Panc1 (cell line): ENCODE measurements at regions of chr1 and their contacts with region 1.

Region 1: GRCh38 chr1:53442299-53442698 is 16.9 kb upstream of the DMRTB1 start:
- DNase-seq: no peak
- ATAC-seq: no peak
- H3K4me3 ChIP-seq: no peak overlapping the region
- H3K27ac ChIP-seq: no peak overlapping the region
- H3K4me1 ChIP-seq: no peaks in the 10 kb centered on the region
- H3K27me3 ChIP-seq: no peaks in the 10 kb centered on the region
- CTCF ChIP-seq: no peak

Region 2: GRCh38 chr1:52444463-52444862 is 997.8 kb before region 1 on chr1:
- CTCF ChIA-PET with region 1: no interaction called
- POLR2A ChIA-PET with region 1: no interaction called
- in situ Hi-C with region 1: no loop called
- intact Hi-C with region 1: no loop called
- DNase-seq: no peak
- ATAC-seq: no peak
- H3K4me3 ChIP-seq: no peak overlapping the region
- H3K27ac ChIP-seq: no peak overlapping the region
- H3K4me1 ChIP-seq: no peaks in the 10 kb centered on the region
- H3K27me3 ChIP-seq: no peaks in the 10 kb centered on the region
- CTCF ChIP-seq: no peak

Region 3: GRCh38 chr1:53266106-53266505 is 176.2 kb before region 1 on chr1:
- CTCF ChIA-PET with region 1: no interaction called
- POLR2A ChIA-PET with region 1: interaction called, 10 read pairs
- in situ Hi-C with region 1: no loop called
- intact Hi-C with region 1: no loop called
- DNase-seq: no peak
- ATAC-seq: peak; percentile 69
- H3K4me3 ChIP-seq: no peak overlapping the region
- H3K27ac ChIP-seq: no peak overlapping the region
- H3K4me1 ChIP-seq: no peaks in the 10 kb centered on the region
- H3K27me3 ChIP-seq: no peaks in the 10 kb centered on the region
- CTCF ChIP-seq: peak; percentile 70; the same call in 1 of the 2 replicates

Region 4: DNA sequence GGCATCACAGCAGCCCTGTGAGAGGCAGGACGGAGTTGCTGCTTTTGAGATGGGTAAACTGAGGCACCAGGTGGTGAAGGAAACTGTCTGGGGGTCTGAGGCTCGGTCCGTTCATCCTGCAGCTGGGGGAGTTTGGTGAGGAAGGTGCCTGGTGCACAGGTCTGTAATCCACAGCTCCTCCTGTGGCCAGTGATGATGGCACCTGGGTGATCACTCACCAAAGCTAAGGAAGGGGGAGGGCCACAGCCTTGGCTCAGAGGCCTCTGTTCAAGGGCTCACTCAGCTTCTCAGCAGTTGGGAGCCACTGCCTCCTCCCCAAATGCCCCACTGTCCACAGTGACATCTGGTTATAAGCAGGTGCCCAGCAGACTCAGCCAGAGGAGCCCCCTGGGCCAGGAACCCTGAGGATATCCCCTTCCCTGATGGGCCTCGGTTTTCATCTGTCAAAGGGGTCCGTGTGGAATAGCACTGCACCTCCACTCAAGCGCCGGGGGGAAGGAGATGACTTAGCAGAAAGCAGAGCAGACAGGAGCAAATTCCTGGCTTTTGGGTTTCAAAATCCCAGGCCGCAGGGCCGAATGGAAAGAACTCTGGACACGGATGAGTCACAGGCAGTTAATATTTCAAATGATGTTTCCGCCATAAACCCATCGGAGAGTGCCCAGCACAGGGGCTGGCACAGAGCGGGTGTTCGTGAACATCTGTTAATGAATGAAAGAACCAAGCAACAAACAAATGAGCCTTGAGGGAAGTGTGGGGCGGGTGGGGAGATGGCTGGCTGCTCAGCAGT is 99.7 kb after region 1 on chr1:
- CTCF ChIA-PET with region 1: no interaction called
- POLR2A ChIA-PET with region 1: no interaction called
- in situ Hi-C with region 1: no loop called
- intact Hi-C with region 1: no loop called
- DNase-seq: no peak
- ATAC-seq: no peak
- H3K4me3 ChIP-seq: no peak overlapping the region
- H3K27ac ChIP-seq: no peak overlapping the region
- H3K4me1 ChIP-seq: no peaks in the 10 kb centered on the region
- H3K27me3 ChIP-seq: no peaks in the 10 kb centered on the region
- CTCF ChIP-seq: no peak